ENCODE measurements at regions of chr7 and their contacts with region 1.

Region 1: GRCh38 chr7:44082541-44083207 is 344 bp upstream of the POLM start:
- DNase-seq: peak; percentile 100
- H3K4me3 ChIP-seq: peak overlapping the region; percentile 64 to 83 (median 77)
- H3K27ac ChIP-seq: peak overlapping the region; percentile 88 to 91 (median 89)
- H3K4me1 ChIP-seq: peaks cover 0 to 25% (median 14%) of the 10 kb centered on the region in 4 donors
- H3K27me3 ChIP-seq: no peaks in the 10 kb centered on the region
- CTCF ChIP-seq: no peak
- EP300 ChIP-seq: no peak
- POLR2A ChIP-seq: peak in 1 of 2 donors; percentile 61

Region 2: GRCh38 chr7:43850348-43851116 is 232.1 kb before region 1 on chr7:
- intact Hi-C with region 1: no loop called
- DNase-seq: no peak
- H3K4me3 ChIP-seq: no peak overlapping the region
- H3K27ac ChIP-seq: no peak overlapping the region
- H3K4me1 ChIP-seq: no peaks in the 10 kb centered on the region
- H3K27me3 ChIP-seq: no peaks in the 10 kb centered on the region
- CTCF ChIP-seq: no peak
- EP300 ChIP-seq: no peak
- POLR2A ChIP-seq: no peak

Region 3: GRCh38 chr7:44044315-44045225 is 38.1 kb before region 1 on chr7 and contains the start of gene DBNL:
- intact Hi-C with region 1: loop called (anchors 2 kb)
- DNase-seq: peak; percentile 96
- H3K4me3 ChIP-seq: peak within 1 kb of the TSS; percentile 79 to 99 (median 94)
- H3K27ac ChIP-seq: peak within 1 kb of the TSS; percentile 86 to 91 (median 88)
- H3K4me1 ChIP-seq: peaks cover 0 to 48% (median 35%) of the 10 kb centered on the region in 4 donors
- H3K27me3 ChIP-seq: no peaks in the 10 kb centered on the region
- CTCF ChIP-seq: no peak
- EP300 ChIP-seq: no peak
- POLR2A ChIP-seq: peak; percentile 63 to 89
- total RNA-seq, gene DBNL: 76.7 to 124 (median 86.6) TPM

Region 4: GRCh38 chr7:44200647-44201461 is 118.2 kb after region 1 on chr7 and contains the start of gene YKT6:
- intact Hi-C with region 1: loop called (anchors 5 kb)
- DNase-seq: peak; percentile 97
- H3K4me3 ChIP-seq: peak within 1 kb of the TSS; percentile 80 to 99 (median 90)
- H3K27ac ChIP-seq: peak within 1 kb of the TSS; percentile 78 to 86 (median 80)
- H3K4me1 ChIP-seq: peaks cover 0 to 17% (median 14%) of the 10 kb centered on the region in 4 donors
- H3K27me3 ChIP-seq: peaks cover 0 to 7% (median 0%) of the 10 kb centered on the region in 3 donors
- CTCF ChIP-seq: peak; percentile 37 to 69 (median 54)
- EP300 ChIP-seq: no peak
- POLR2A ChIP-seq: peak; percentile 30 to 63
- total RNA-seq, gene YKT6: 39.2 to 50.1 (median 44.5) TPM

Region 5: DNA sequence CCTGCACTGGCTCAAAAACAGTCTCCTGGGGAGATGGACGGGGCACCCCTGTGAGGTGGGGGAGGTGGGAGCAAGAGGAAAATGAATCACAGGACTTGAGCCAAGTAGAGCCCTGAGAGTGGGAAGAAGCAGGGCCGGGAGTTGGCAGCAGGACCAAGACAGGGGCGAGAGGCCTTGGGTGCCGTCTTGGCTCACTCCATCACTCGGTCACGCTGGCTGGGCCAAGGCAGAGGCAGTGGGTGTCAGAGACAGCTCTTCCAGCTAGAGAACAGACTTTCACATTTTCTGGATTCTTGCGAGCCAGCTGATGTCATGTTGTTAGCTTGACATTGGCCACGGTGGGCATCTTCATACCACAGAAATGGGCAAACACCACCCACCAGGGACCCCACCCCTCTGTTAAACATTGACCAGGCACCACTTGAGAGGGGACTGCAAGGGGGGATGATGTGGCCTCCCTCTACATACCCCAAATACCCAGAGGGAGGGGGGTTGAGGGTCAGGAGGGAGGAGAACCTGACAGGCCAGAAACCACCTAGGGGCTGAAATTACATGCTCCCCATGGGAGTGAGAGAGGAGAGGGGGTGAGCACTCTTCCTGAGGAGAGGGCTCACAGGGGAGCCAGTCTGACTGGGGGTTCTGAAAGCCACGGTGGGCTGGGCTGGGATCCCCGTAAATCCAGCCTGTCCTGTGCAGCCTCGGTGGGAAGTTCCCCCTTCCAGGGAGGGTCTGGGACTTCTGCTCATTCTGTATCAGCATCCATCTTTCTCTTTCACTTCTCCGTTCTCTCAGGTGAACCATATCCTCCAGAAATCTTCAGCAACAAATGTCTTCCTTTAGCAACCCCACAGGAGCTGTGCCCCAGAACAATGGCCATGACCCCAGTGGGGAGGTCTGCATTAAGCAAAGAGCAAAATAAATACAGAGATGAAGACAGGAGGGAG is 223.2 kb after region 1 on chr7:
- intact Hi-C with region 1: no loop called
- DNase-seq: no peak
- H3K4me3 ChIP-seq: no peak overlapping the region
- H3K27ac ChIP-seq: no peak overlapping the region
- H3K4me1 ChIP-seq: peaks cover 0 to 10% (median 9%) of the 10 kb centered on the region in 4 donors
- H3K27me3 ChIP-seq: peaks cover 0 to 24% (median 19%) of the 10 kb centered on the region in 3 donors
- CTCF ChIP-seq: no peak
- EP300 ChIP-seq: no peak
- POLR2A ChIP-seq: no peak

Measured in sigmoid colon (tissue), 7 donors.